ENCODE measurements at regions of chr15 and their contacts with region 1.

Region 1: DNA sequence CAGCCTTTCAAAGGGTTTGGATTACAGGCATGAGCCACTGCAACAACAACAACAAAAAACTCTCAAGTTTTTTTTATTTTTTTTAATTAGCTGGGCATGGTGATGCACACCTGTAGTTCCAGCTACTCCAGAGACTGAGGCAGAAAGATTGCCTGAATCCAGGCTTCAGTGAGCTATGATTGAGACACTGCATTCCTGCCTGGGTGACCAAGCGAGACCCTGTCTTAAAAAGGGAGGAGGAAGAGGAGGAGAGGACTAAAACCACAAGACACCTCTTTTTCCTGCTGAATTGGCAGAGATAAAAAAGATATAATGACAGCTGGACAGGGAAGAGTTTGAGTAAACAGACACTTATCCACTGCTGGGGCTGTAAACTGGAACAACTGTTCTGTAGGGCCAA is 22.7 kb upstream of the CHRNB4 start:
- DNase-seq: no peak
- ATAC-seq: no peak
- H3K4me3 ChIP-seq: no peak overlapping the region
- H3K27ac ChIP-seq: no peak overlapping the region
- H3K4me1 ChIP-seq: no peaks in the 10 kb centered on the region
- H3K27me3 ChIP-seq: no peaks in the 10 kb centered on the region
- CTCF ChIP-seq: no peak

Region 2: GRCh38 chr15:78644979-78645378 is 18.7 kb before region 1 on chr15:
- CTCF ChIA-PET with region 1: no interaction called
- POLR2A ChIA-PET with region 1: interaction called, 11 read pairs
- in situ Hi-C with region 1: no loop called
- intact Hi-C with region 1: no loop called
- DNase-seq: no peak
- ATAC-seq: no peak
- H3K4me3 ChIP-seq: no peak overlapping the region
- H3K27ac ChIP-seq: no peak overlapping the region
- H3K4me1 ChIP-seq: no peaks in the 10 kb centered on the region
- H3K27me3 ChIP-seq: no peaks in the 10 kb centered on the region
- CTCF ChIP-seq: no peak